Aorta (tissue), 5 donors: ENCODE measurements at regions of chr15 and their contacts with region 1.

Region 1: DNA sequence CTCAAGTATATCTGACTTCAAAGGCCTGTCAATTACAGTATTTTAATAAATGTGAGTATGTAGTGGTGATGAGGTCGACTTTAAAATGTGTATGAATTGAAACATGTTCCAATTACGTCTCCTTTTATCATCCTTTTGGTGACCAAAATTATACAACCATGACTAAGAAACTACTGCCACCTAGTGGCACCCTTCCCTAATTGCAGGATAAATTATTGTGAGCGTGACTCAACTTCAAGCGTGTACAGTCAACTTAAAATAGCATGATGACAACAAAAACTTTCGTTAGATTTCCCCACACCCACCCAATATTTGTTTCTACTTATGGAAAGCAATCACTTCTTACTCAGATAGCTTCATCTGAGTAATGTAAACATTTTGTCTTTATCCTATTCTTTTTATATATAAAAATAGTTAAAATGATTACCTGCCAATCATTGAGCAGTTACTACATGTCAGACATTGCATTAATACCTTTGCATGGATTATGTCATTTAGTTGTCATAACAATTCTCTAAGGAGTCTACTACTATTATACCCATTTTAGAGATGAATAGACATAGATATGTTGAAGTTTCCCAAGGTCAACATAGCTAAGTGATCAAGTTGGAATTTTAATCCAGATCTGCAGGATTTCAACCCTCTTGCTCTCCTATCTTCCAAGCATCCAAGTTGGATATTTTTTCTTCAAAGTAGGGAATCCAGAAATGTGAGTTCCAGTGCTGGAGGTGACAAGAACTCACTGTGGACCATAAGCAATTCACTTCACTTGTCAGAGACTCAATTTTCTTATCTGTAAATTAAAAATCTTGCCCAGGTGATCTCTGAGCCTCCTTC is 106.0 kb downstream of the MEX3B start:
- DNase-seq: no peak
- ATAC-seq: no peak
- H3K4me3 ChIP-seq: no peak overlapping the region
- H3K27ac ChIP-seq: no peak overlapping the region
- H3K4me1 ChIP-seq: no peaks in the 10 kb centered on the region
- H3K27me3 ChIP-seq: no peaks in the 10 kb centered on the region

Region 2: GRCh38 chr15:81492331-81492963 is 447.4 kb before region 1 on chr15:
- intact Hi-C with region 1: loop called in 1 of 2 experiments (anchors 10 kb)
- DNase-seq: no peak
- ATAC-seq: no peak
- H3K4me3 ChIP-seq: no peak overlapping the region
- H3K27ac ChIP-seq: no peak overlapping the region
- H3K4me1 ChIP-seq: no peaks in the 10 kb centered on the region
- H3K27me3 ChIP-seq: no peaks in the 10 kb centered on the region

Region 3: GRCh38 chr15:82046666-82047452 is 107.0 kb after region 1 on chr15:
- intact Hi-C with region 1: loop called in 1 of 2 experiments (anchors 5 kb)
- DNase-seq: peak; percentile 94 to 95
- ATAC-seq: peak; percentile 89
- H3K4me3 ChIP-seq: peak overlapping the region; percentile 65 to 69
- H3K27ac ChIP-seq: peak overlapping the region in 1 of 2 donors; percentile 50
- H3K4me1 ChIP-seq: no peaks in the 10 kb centered on the region
- H3K27me3 ChIP-seq: no peaks in the 10 kb centered on the region

Region 4: GRCh38 chr15:82146990-82147461 is 207.2 kb after region 1 on chr15:
- intact Hi-C with region 1: no loop called
- DNase-seq: no peak
- ATAC-seq: no peak
- H3K4me3 ChIP-seq: no peak overlapping the region
- H3K27ac ChIP-seq: no peak overlapping the region
- H3K4me1 ChIP-seq: peaks cover 0 to 1% of the 10 kb centered on the region in 2 donors
- H3K27me3 ChIP-seq: no peaks in the 10 kb centered on the region

Region 5: GRCh38 chr15:82312586-82313349 is 372.9 kb after region 1 on chr15:
- intact Hi-C with region 1: no loop called
- DNase-seq: peak in 1 of 2 donors; percentile 38
- ATAC-seq: no peak
- H3K4me3 ChIP-seq: no peak overlapping the region
- H3K27ac ChIP-seq: no peak overlapping the region
- H3K4me1 ChIP-seq: no peaks in the 10 kb centered on the region
- H3K27me3 ChIP-seq: no peaks in the 10 kb centered on the region